CD14-positive monocyte (primary cell): ENCODE measurements at regions of chr3 and their contacts with region 1.

Region 1: GRCh38 chr3:156554842-156555687 is at the start of gene SSR3:
- DNase-seq: peak; percentile 97 to 99 (median 98)
- H3K4me3 ChIP-seq: peak within 1 kb of the TSS; percentile 71 to 92 (median 72)
- H3K4me3 Mint-ChIP-seq: peak within 1 kb of the TSS; percentile 96 to 98
- H3K27ac ChIP-seq: peak within 1 kb of the TSS; percentile 28 to 93
- H3K27ac Mint-ChIP-seq: peak within 1 kb of the TSS; percentile 88 to 96 (median 94)
- H3K4me1 ChIP-seq: peaks cover 18 to 28% of the 10 kb centered on the region in 2 donors
- H3K4me1 Mint-ChIP-seq: peaks cover 36% of the 10 kb centered on the region
- H3K27me3 ChIP-seq: no peaks in the 10 kb centered on the region
- H3K27me3 Mint-ChIP-seq: peaks cover 0 to 3% (median 2%) of the 10 kb centered on the region in 3 donors
- CTCF ChIP-seq: peak; percentile 20
- polyA plus RNA-seq, gene SSR3: 46.6 to 243 (median 230) TPM

Region 2: GRCh38 chr3:156605686-156606605 is 50.9 kb after region 1 on chr3:
- intact Hi-C with region 1: loop called (anchors 10 kb)
- DNase-seq: peak; percentile 21 to 35 (median 29)
- H3K4me3 ChIP-seq: peak overlapping the region; percentile 49 to 77 (median 57)
- H3K4me3 Mint-ChIP-seq: peak overlapping the region; percentile 86 to 93
- H3K27ac ChIP-seq: peak overlapping the region; percentile 84 to 87
- H3K27ac Mint-ChIP-seq: peak overlapping the region; percentile 85 to 96 (median 91)
- H3K4me1 ChIP-seq: peaks cover 26 to 28% of the 10 kb centered on the region in 2 donors
- H3K4me1 Mint-ChIP-seq: peaks cover 38% of the 10 kb centered on the region
- H3K27me3 ChIP-seq: no peaks in the 10 kb centered on the region
- H3K27me3 Mint-ChIP-seq: no peaks in the 10 kb centered on the region
- CTCF ChIP-seq: no peak

Region 3: DNA sequence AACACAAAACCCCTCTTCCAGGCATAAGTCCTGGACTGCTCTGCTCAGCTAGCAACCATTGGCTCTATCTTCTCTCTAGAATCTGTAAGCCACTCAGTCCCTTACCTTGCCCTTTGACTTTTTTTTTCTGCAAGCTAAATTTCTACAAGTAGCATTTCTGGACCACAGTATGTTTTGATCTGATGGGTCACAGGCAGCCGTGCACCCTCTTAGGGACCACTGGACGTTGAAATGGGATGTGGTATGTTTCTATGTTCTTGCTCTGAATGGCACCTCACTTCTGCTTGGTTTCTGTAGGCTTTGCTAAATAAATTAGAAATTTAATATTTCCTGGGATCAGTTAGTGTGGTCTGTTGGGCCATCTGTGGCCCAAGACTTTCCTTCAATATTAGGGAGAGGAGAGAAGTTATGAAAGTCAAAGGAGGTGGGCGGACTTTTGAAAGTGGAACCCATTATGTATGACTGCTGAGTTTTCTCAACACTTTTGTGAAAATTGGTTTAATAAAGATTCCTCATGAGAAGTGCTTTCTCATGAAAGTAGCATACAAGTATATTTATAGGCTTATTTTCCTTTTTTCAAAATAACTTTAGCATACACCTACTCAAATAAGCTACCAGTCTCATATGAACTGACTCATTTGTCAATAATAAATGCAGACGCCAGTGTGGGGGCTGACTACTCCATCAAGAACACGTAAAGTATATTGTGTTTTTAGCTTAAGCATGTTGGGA is 100.9 kb after region 1 on chr3:
- intact Hi-C with region 1: no loop called
- DNase-seq: no peak
- H3K4me3 ChIP-seq: no peak overlapping the region
- H3K4me3 Mint-ChIP-seq: no peak overlapping the region
- H3K27ac ChIP-seq: no peak overlapping the region
- H3K27ac Mint-ChIP-seq: no peak overlapping the region
- H3K4me1 ChIP-seq: peaks cover 5 to 6% of the 10 kb centered on the region in 2 donors
- H3K4me1 Mint-ChIP-seq: peaks cover 11% of the 10 kb centered on the region
- H3K27me3 ChIP-seq: no peaks in the 10 kb centered on the region
- H3K27me3 Mint-ChIP-seq: peaks cover 0 to 2% (median 0%) of the 10 kb centered on the region in 3 donors
- CTCF ChIP-seq: no peak

Region 4: DNA sequence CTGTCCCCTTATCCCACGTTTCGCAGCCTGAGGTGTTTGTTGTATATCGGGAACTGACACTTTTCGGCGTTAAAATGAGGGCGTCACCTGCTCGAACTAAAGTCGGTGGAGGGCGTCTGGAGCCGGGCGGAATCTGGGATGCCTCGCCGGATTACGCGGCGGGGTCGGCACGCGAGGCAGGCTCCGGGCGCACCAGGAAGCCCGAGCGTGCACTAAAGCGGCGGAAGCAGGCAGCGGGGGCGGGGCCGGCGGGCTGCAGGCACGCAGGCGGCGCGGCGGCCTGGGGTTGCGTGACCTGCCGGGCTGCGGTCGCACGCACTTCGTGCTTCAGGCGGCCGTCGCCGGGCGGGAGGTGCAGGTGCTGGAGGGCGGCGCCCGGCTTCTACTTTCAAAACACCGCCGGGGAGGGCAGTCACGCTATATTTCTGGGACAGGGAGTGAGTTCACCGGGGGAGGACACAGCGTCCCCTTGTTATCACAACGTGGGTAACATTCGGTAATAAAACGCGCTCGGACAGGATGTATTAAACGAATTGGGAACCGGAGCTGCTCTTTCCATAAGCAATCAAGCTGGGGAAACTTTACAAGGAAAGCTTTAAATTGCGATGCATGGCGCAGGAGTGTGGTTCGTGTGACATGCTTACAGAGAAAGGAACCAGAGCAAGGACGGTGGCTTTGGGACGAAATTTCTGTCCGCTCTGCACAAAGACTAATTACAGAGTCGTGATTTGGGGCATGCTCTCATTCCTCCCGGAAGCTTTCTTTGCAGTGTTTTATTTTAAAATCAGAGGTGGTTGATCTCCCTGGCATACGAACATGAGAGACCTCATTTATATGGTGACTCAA is 262.0 kb after region 1 on chr3:
- intact Hi-C with region 1: loop called in 1 of 2 experiments (anchors 10 kb)
- DNase-seq: peak; percentile 95 to 98 (median 96)
- H3K4me3 ChIP-seq: peak overlapping the region; percentile 46 to 78 (median 69)
- H3K4me3 Mint-ChIP-seq: peak overlapping the region; percentile 91 to 97
- H3K27ac ChIP-seq: peak overlapping the region; percentile 61 to 94
- H3K27ac Mint-ChIP-seq: peak overlapping the region; percentile 76 to 91 (median 88)
- H3K4me1 ChIP-seq: peaks cover 17 to 20% of the 10 kb centered on the region in 2 donors
- H3K4me1 Mint-ChIP-seq: peaks cover 27% of the 10 kb centered on the region
- H3K27me3 ChIP-seq: no peaks in the 10 kb centered on the region
- H3K27me3 Mint-ChIP-seq: peaks cover 5 to 14% (median 10%) of the 10 kb centered on the region in 3 donors
- CTCF ChIP-seq: no peak

Region 5: DNA sequence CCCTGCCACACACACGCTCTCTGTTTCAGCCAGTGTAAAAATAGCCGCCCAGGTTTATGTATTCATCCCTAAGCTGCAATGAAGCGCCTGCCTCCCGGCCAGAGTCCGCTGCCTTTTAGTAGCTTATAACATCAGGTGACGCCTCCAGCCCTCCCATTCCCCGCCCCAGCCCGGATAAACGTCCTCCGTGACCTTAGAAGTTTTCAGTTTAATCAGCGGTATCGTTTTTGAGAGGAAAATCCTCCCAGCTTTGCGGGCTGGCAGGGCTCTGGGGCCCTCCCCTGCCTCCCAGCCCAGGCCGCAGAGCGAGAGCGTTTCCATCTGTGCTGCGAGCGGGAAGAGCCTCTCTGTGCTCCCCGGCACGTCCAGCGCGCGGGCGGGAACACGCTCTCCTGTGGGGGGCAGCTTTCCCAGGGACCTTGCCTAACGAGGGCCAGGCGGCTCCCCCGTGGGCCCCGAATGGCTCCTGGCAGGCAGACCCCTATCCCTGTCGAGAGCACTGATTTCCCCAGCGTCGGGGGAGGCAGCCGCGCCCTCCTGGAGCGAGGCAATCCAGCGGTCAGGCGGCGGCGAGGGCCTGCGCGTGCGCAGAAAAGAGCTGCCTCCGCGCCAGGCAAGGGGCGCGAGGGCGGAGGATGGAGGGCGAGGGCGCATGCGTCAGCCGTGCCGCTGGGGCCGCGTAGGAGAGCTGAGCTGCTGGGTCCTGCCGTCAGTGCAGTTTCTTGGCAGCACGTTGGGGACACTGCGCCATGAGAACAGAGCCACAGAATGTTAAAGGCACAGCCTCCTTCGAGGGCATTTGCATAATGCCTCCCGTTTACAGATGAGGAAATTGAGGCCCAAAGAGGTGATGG is 533.8 kb after region 1 on chr3:
- intact Hi-C with region 1: loop called in 1 of 2 experiments (anchors 5 kb)
- DNase-seq: peak; percentile 89 to 91 (median 89)
- H3K4me3 ChIP-seq: peak overlapping the region; percentile 48 to 80 (median 77)
- H3K4me3 Mint-ChIP-seq: peak overlapping the region; percentile 81 to 90
- H3K27ac ChIP-seq: peak overlapping the region; percentile 83 to 98
- H3K27ac Mint-ChIP-seq: peak overlapping the region; percentile 87 to 94 (median 91)
- H3K4me1 ChIP-seq: peaks cover 33 to 36% of the 10 kb centered on the region in 2 donors
- H3K4me1 Mint-ChIP-seq: peaks cover 34% of the 10 kb centered on the region
- H3K27me3 ChIP-seq: peaks cover 0 to 6% of the 10 kb centered on the region in 2 donors
- H3K27me3 Mint-ChIP-seq: peaks cover 6 to 10% (median 6%) of the 10 kb centered on the region in 3 donors
- CTCF ChIP-seq: no peak

Region 6: GRCh38 chr3:157148196-157148889 is 593.3 kb after region 1 on chr3:
- intact Hi-C with region 1: loop called in 1 of 2 experiments (anchors 10 kb)
- DNase-seq: no peak
- H3K4me3 ChIP-seq: no peak overlapping the region
- H3K4me3 Mint-ChIP-seq: no peak overlapping the region
- H3K27ac ChIP-seq: no peak overlapping the region
- H3K27ac Mint-ChIP-seq: peak overlapping the region in 1 of 7 donors; percentile 77
- H3K4me1 ChIP-seq: no peaks in the 10 kb centered on the region
- H3K4me1 Mint-ChIP-seq: no peaks in the 10 kb centered on the region
- H3K27me3 ChIP-seq: no peaks in the 10 kb centered on the region
- H3K27me3 Mint-ChIP-seq: no peaks in the 10 kb centered on the region
- CTCF ChIP-seq: no peak